Aorta (tissue), 5 donors: ENCODE measurements at regions of chr21 and their contacts with region 1.

Region 1: DNA sequence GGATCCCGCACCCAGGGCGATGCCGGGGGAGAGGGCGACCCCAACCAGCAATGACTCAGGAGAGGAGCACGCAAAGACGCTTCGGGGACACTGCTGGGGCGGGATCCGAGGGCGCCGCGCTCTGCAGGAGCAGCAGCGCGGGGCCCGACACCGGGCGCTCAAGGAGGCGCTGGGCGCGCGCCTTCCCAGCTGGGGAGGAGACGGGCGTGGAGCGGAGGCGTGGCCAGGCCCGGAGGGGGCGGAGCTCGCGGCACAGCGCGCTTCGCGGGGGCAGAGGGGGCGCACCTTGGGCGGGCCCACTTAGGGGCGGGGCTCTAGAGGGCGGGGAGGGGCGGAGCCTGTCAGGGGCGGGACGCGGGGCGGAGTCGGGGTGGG is 369 bp downstream of the SUMO3 start:
- DNase-seq: peak; percentile 95 to 98
- ATAC-seq: peak; percentile 95
- H3K4me3 ChIP-seq: peak overlapping the region; percentile 51 to 67
- H3K27ac ChIP-seq: no peak overlapping the region
- H3K4me1 ChIP-seq: no peaks in the 10 kb centered on the region
- H3K27me3 ChIP-seq: no peaks in the 10 kb centered on the region

Region 2: GRCh38 chr21:44338971-44339910 is 478.3 kb before region 1 on chr21 and contains the start of gene CFAP410:
- intact Hi-C with region 1: loop called in 1 of 2 experiments (anchors 10 kb)
- DNase-seq: peak; percentile 96 to 98
- ATAC-seq: peak; percentile 98
- H3K4me3 ChIP-seq: peak within 1 kb of the TSS; percentile 69 to 87
- H3K27ac ChIP-seq: peak within 1 kb of the TSS; percentile 53 to 99
- H3K4me1 ChIP-seq: peaks cover 0 to 4% of the 10 kb centered on the region in 2 donors
- H3K27me3 ChIP-seq: no peaks in the 10 kb centered on the region
- total RNA-seq, gene CFAP410: 19.4 to 20.9 TPM

Region 3: DNA sequence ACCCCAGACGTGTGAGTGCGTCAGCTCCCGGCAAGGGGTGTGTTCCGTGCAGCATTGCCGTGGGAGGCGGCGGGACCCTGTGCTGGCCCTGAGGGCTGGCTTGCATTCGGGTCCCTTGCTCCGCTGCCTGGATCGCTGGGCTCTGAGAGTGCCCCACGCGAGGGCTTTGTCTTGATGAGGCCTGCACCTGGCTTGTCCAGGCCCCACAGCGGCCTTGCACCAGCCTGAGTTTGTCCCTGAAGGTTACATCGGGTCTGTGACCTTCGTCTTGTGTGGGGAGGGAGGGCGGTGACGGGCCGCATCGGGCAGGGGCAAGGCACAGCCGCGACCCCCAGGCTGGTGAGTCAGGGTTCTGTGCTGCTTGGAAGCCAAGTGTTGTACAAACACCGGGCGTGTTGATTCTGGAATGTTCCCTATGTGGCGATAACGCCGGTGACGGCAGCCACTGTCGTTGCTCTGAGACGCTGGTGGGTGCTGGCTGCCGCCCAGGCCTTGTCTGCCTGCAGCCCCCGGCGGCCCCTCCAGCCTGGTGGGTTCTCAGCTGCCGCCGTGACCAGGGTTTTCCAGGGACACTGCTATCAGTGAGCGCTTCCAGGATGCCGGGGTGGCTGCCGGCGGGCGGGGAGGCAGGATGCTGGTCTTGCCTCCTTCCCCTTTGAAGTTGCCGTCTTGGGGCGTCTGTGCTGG is 165.2 kb after region 1 on chr21:
- intact Hi-C with region 1: no loop called
- DNase-seq: peak; percentile 91 to 94
- ATAC-seq: peak; percentile 69
- H3K4me3 ChIP-seq: no peak overlapping the region
- H3K27ac ChIP-seq: peak overlapping the region; percentile 7 to 79
- H3K4me1 ChIP-seq: no peaks in the 10 kb centered on the region
- H3K27me3 ChIP-seq: no peaks in the 10 kb centered on the region